ENCODE measurements at regions of chr15 and their contacts with region 1.

Region 1: DNA sequence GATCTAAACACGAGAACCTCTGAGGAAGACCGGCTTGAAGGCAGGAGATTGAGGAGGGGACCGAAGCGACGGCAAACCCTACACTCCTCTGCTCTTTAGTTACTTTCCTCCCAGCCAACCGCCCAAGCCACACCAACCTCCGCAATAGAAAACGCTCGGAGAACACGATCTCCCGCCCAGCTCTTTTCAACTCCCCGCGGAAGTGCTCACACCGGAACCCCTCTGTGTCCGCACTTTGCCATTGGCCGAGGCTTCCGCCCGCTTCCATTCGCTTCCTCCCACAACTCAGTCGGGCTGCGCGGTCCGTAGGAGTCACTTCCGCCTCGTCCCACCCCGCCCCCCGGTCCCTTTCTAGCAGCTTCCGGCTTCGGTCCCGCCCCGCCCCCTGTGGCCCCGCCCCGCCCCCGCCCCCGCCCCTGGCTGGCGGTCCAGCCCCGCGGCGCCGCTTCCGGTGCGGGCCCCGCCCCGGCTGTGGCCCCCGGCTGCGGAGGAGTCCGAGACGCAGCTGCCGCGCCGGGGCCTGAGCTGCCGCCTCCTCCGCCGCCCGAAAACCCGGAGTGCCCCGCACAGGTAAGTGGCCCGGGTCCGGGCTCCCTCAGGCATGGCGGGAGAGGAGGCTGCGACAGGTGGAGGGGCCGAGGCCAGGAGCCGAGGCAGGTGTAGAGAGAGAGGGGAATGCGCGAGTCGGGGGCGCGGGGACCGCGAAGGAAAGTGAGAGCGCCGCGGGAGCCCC is at the start of gene ARID3B:
- DNase-seq: peak; percentile 98 to 99
- H3K4me3 ChIP-seq: peak within 1 kb of the TSS; percentile 80 to 89
- H3K27ac ChIP-seq: peak within 1 kb of the TSS; percentile 76 to 82
- H3K4me1 ChIP-seq: peaks cover 0 to 42% (median 26%) of the 10 kb centered on the region in 4 donors
- H3K27me3 ChIP-seq: no peaks in the 10 kb centered on the region
- CTCF ChIP-seq: no peak

Region 2: GRCh38 chr15:74468341-74469032 is 72.4 kb before region 1 on chr15:
- intact Hi-C with region 1: loop called (anchors 5 kb)
- DNase-seq: no peak
- H3K4me3 ChIP-seq: no peak overlapping the region
- H3K27ac ChIP-seq: no peak overlapping the region
- H3K4me1 ChIP-seq: no peaks in the 10 kb centered on the region
- H3K27me3 ChIP-seq: no peaks in the 10 kb centered on the region
- CTCF ChIP-seq: no peak

Region 3: DNA sequence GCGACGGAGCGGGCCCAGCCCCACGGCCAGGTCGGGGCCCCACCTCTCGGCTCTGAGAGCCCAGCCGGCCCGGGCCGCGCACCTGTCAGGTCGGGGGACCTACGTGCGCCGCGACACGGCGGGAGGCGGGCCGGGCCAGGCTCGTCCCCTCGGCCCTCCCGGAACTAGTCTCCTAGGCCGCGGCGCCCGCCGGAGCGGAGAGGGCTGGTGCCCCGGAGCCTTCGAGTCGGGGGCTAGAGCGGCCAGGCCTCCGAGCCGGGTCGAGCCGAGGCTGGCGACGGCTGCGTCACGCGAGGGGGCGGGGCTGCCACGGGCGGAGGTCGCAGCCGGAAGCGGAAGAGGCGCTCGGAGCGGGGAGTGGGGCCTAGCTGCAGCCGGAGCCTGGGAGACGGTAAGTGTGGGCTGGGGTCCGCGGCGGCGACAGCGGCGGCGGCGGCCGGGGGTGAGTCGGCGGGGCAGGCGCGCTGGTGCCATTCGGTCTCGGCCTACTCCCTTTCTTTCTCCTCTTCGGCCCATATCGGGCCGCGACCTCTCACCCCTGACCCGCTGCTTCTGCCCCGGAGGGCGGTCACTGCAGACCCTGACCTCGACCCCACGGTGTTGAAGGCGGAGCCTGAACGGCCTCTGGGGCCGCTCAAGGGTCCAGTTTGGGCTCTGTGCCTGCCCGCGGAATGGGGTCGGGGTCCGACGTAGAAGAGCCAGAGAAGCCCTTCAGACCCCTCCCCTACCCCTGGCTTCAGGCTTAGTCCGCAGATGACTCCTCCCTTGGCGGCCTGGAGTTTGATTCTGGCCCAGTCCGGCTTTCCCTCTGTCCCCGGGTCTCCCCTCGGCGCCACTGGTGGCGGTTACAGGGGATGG is 74.8 kb after region 1 on chr15 and contains the start of gene CLK3:
- intact Hi-C with region 1: loop called (anchors 2 kb)
- DNase-seq: peak; percentile 91 to 98
- H3K4me3 ChIP-seq: peak within 1 kb of the TSS; percentile 97 to 98
- H3K27ac ChIP-seq: peak within 1 kb of the TSS; percentile 99
- H3K4me1 ChIP-seq: peaks cover 0 to 42% (median 34%) of the 10 kb centered on the region in 4 donors
- H3K27me3 ChIP-seq: no peaks in the 10 kb centered on the region
- CTCF ChIP-seq: peak in 1 of 2 experiments; percentile 7

Region 4: GRCh38 chr15:74978503-74978902 is 437.6 kb after region 1 on chr15:
- intact Hi-C with region 1: no loop called
- DNase-seq: no peak
- H3K4me3 ChIP-seq: no peak overlapping the region
- H3K27ac ChIP-seq: no peak overlapping the region
- H3K4me1 ChIP-seq: no peaks in the 10 kb centered on the region
- H3K27me3 ChIP-seq: no peaks in the 10 kb centered on the region
- CTCF ChIP-seq: no peak

Measured in tibial artery (tissue), 4 donors.